ENCODE measurements at regions of chr16 and their contacts with region 1.

Region 1: GRCh38 chr16:84970447-84971127 is 40.7 kb downstream of the ZDHHC7 start:
- DNase-seq: peak; percentile 81
- H3K4me3 ChIP-seq: no peak overlapping the region
- H3K27ac ChIP-seq: no peak overlapping the region
- H3K4me1 ChIP-seq: no peaks in the 10 kb centered on the region
- H3K27me3 ChIP-seq: no peaks in the 10 kb centered on the region
- CTCF ChIP-seq: peak; percentile 96

Region 2: DNA sequence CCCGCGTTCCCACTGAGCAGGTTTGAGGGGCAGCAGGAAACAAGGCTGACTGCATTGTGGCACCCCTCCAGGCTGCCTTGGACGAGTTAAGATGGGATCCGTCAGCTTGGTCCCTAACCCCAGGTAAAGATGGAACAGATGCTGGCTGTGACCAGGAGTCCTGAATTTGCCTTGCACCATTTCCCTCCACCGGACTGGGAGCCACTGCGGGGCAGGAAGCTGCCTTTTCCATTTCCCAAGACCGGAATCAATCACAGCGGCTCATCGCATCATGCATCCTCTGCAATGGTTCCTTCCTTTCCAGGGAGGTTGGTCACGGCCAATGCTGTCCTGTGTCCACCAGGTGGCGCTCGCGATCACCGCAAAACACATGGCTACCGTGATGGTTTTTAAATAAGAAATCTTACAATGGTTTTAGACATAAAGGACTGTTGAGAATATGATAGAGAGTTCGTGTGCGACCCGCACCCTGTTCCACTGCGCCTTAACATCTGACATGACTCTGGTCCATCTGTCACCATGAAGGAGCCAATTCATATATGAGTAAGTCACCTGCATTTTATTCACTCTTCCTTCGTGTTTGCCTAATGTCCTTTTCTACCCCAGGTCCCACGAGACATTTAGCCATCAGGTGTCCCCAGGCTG is 459.3 kb before region 1 on chr16:
- CTCF ChIA-PET with region 1: no interaction called
- POLR2A ChIA-PET with region 1: no interaction called
- intact Hi-C with region 1: loop called (anchors 2 kb)
- DNase-seq: peak; percentile 88
- H3K4me3 ChIP-seq: no peak overlapping the region
- H3K27ac ChIP-seq: no peak overlapping the region
- H3K4me1 ChIP-seq: no peaks in the 10 kb centered on the region
- H3K27me3 ChIP-seq: no peaks in the 10 kb centered on the region
- CTCF ChIP-seq: peak; percentile 97

Region 3: GRCh38 chr16:84617791-84618580 is 352.6 kb before region 1 on chr16 and contains the start of gene COTL1:
- CTCF ChIA-PET with region 1: no interaction called
- POLR2A ChIA-PET with region 1: no interaction called
- intact Hi-C with region 1: loop called (anchors 5 kb)
- DNase-seq: peak; percentile 98
- H3K4me3 ChIP-seq: peak within 1 kb of the TSS; percentile 68
- H3K27ac ChIP-seq: no peak within 1 kb of the TSS
- H3K4me1 ChIP-seq: peaks cover 25% of the 10 kb centered on the region
- H3K27me3 ChIP-seq: no peaks in the 10 kb centered on the region
- CTCF ChIP-seq: no peak
- total RNA-seq, gene COTL1: 34.1 and 35.9 TPM in 2 replicates

Region 4: GRCh38 chr16:84738255-84739038 is 232.1 kb before region 1 on chr16:
- CTCF ChIA-PET with region 1: interaction called, 3 read pairs
- POLR2A ChIA-PET with region 1: no interaction called
- intact Hi-C with region 1: loop called (anchors 5 kb)
- DNase-seq: peak; percentile 87
- H3K4me3 ChIP-seq: no peak overlapping the region
- H3K27ac ChIP-seq: peak overlapping the region; percentile 59
- H3K4me1 ChIP-seq: peaks cover 63% of the 10 kb centered on the region
- H3K27me3 ChIP-seq: no peaks in the 10 kb centered on the region
- CTCF ChIP-seq: peak; percentile 96

Region 5: DNA sequence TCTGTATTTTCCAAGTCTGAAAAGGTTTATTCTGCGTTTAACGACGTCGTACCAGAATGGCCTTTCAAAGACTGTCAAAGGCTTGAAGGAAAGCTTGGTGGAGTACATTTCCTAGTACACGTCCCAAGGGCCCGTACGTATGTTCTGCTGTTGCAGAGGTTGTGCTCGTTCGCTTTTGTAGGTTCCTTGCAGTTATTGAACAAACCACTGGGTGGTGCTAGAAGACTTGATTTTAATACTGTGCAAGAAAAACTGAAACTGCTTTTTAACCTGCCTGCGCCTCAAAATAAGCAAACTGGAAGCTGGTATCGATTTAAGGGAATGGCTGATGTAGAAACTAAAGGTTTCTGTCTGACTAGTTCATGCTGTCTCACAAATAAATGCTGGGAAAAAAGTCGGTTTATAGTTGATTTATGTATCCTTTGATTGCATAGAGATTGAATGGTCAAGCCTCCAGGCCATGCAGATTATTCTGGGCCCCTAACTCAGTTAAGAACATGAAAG is 216.2 kb before region 1 on chr16:
- CTCF ChIA-PET with region 1: interaction called, 18 read pairs
- POLR2A ChIA-PET with region 1: no interaction called
- intact Hi-C with region 1: loop called (anchors 2 kb)
- DNase-seq: peak; percentile 92
- H3K4me3 ChIP-seq: no peak overlapping the region
- H3K27ac ChIP-seq: peak overlapping the region; percentile 40
- H3K4me1 ChIP-seq: peaks cover 28% of the 10 kb centered on the region
- H3K27me3 ChIP-seq: no peaks in the 10 kb centered on the region
- CTCF ChIP-seq: peak; percentile 85

Region 6: DNA sequence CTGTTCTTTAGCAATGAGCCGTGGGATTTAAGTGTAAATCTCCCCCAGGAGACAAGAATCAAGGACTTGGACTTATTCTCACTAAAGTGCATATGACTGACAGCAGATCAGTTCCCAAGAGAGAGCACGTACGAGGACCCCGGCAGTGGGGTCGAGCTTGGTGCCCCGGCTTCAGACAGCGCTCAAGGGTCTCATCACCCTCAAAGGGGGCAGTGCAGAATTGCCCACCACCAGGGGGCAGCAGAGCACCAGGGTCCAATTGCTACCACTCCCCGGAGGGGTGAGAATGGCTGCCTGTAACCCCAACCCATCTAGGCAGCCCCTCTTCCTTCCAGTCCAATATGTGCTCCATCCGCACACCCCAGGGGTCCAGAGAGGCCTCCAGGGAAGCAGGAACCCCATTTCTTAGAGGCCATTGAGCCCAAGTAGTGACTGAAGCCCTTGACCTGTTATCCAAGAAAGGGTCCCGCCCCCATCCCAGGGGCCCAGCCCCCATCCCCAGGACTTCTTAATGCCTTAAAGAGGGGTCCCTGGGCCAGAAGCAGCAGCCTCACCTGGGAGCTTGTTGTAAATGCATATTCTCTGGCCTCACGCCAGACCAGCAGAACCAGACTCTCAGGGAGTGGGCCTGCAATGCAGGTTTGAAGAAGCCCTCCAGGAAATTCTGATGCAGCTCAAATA is 45.4 kb before region 1 on chr16:
- CTCF ChIA-PET with region 1: no interaction called
- POLR2A ChIA-PET with region 1: no interaction called
- intact Hi-C with region 1: loop called (anchors 5 kb)
- DNase-seq: peak; percentile 41
- H3K4me3 ChIP-seq: no peak overlapping the region
- H3K27ac ChIP-seq: no peak overlapping the region
- H3K4me1 ChIP-seq: no peaks in the 10 kb centered on the region
- H3K27me3 ChIP-seq: no peaks in the 10 kb centered on the region
- CTCF ChIP-seq: peak; percentile 80

Measured in A673 (cell line).